ENCODE measurements at regions of chr7 and their contacts with region 1.

Region 1: GRCh38 chr7:130069978-130070860 is at the start of gene KLHDC10:
- DNase-seq: peak; percentile 99
- H3K4me3 ChIP-seq: peak within 1 kb of the TSS; percentile 73
- H3K27ac ChIP-seq: peak within 1 kb of the TSS; percentile 73
- H3K4me1 ChIP-seq: peaks cover 14% of the 10 kb centered on the region
- H3K27me3 ChIP-seq: no peaks in the 10 kb centered on the region
- CTCF ChIP-seq: no peak
- total RNA-seq, gene KLHDC10: 31.4 and 37.5 TPM in 2 replicates

Region 2: DNA sequence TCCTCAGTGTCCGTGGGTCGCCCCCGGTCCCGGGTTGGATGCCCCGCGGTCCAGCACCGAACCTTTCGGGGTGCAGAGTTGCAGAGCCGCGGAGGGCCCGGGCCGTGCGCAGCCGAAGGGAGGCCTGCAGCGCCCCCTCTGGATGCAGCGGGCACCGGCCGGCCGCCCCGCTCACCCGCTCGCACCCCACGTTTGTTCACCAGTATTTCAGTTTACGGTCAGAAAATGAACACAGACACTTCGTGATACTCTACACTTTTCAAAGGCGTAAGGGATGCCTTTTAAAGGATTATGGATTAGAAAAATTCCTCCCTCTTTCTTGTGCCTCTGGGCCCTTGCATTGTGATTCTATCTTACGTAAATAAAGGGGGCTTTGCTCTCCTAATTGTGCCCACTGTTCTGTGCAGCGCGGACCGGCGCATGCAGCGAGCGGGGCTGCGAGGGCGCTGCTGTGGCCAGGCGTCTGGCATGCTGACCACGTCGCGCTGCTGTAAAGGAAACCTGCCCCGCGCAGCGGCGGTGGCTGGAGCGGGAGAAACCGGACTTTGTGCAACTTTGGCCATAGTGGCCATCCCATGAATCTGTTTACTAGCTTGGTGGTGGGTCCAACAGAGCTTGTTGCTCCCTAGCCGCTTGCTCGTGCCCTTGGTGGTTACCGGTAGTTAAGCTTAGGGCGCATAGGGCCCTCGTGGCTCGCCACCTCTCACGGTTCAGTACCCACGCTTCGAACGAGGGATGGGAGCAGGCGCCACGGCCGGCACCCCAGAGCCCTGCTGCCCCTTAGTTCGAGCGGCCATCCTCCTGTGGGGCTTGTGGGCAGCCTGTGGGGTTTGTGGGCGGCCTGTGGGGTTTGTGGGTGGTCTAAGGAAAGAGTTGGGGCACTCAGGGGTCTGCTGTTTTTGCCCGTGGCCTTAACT is 420.9 kb after region 1 on chr7:
- CTCF ChIA-PET with region 1: no interaction called
- POLR2A ChIA-PET with region 1: no interaction called
- intact Hi-C with region 1: loop called (anchors 10 kb)
- DNase-seq: no peak
- H3K4me3 ChIP-seq: peak overlapping the region; percentile 56
- H3K27ac ChIP-seq: no peak overlapping the region
- H3K4me1 ChIP-seq: peaks cover 3% of the 10 kb centered on the region
- H3K27me3 ChIP-seq: no peaks in the 10 kb centered on the region
- CTCF ChIP-seq: peak; percentile 52; the same call in 1 of the 2 replicates

Region 3: DNA sequence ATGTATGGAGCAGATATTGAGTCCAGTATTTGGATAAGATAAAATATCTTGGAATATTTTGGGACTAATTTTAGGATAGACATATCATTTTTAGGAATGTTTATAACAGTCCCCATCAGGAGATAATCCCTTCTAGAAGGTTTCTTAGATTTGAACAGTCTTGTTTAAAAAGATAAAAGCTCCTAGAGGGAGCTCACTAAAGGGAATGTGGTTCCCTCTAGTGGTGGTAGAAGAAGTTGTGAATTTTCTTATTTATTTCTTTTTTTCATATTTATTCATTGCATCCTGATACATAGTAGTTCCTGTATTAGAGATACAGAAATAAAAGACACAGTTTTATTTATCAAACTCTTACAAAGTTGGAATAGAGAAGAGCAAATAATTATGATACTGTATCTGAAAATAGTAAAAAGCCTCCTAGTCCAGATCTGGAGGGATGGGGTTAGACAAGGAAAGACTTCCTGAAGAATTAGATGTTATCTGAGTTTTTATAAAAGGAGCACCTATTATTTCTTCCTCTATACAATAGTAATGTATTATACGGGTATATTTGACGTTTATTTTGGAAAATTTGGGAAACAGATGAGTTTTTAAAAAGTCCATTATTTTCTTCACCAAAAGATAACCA is 688.3 kb after region 1 on chr7:
- CTCF ChIA-PET with region 1: interaction called, 22 read pairs
- POLR2A ChIA-PET with region 1: no interaction called
- intact Hi-C with region 1: loop called (anchors 1 kb)
- DNase-seq: peak; percentile 71
- H3K4me3 ChIP-seq: no peak overlapping the region
- H3K27ac ChIP-seq: no peak overlapping the region
- H3K4me1 ChIP-seq: no peaks in the 10 kb centered on the region
- H3K27me3 ChIP-seq: no peaks in the 10 kb centered on the region
- CTCF ChIP-seq: peak; percentile 84

Region 4: DNA sequence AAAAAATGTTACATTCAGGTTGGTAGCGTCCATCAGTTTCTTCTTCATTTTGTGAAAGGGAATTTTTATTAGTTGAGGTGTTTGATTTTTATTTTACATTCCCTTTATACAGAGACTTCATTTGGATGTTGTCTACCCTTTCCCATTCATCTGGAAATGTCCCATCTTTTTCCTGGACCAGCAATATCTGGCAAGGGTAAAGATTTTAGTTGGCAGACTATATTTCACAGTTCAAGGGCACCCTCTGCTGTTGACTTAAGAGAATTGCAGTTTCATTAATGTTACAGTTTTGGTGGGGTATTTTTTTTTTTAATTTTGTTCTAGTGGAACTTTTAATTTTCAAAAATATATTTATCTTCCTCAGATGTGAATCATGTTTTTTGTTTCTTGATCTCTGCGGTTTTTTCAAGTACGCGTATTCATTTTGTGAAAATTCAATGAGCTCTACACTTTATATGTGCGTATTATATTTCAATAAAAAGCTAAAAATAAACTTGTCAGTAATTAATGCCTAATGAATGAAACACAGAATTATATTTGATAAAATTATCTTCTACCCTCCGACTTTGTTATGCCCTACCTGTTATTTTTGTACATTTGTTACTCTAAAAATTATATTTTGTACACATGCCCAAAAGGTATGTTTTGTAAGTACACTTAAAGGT is 761.7 kb after region 1 on chr7:
- CTCF ChIA-PET with region 1: interaction called, 3 read pairs
- POLR2A ChIA-PET with region 1: no interaction called
- intact Hi-C with region 1: loop called (anchors 1 kb)
- DNase-seq: peak; percentile 59
- H3K4me3 ChIP-seq: no peak overlapping the region
- H3K27ac ChIP-seq: no peak overlapping the region
- H3K4me1 ChIP-seq: no peaks in the 10 kb centered on the region
- H3K27me3 ChIP-seq: no peaks in the 10 kb centered on the region
- CTCF ChIP-seq: peak; percentile 83

Measured in A673 (cell line).